ENCODE measurements at regions of chr5 and their contacts with region 1.

Region 1: DNA sequence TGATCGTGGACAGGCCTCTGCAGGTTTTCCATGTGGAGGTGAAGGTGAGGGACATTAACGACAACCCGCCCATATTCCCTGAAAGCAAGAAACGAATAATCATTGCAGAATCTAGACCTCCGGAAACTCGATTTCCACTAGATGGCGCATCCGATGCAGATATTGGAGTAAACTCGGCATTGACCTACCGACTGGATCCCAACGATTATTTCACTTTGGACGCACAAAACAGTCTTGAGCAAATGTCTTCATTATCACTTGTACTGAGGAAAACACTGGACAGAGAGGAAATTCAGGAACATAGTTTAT is 621 bp downstream of the PCDHA13 start:
- DNase-seq: peak; percentile 46
- H3K4me3 Mint-ChIP-seq: peak overlapping the region; percentile 42
- H3K27ac Mint-ChIP-seq: no peak overlapping the region
- H3K4me1 Mint-ChIP-seq: no peaks in the 10 kb centered on the region
- H3K27me3 Mint-ChIP-seq: no peaks in the 10 kb centered on the region
- CTCF ChIP-seq: no peak

Region 2: GRCh38 chr5:140806834-140807775 is 75.4 kb before region 1 on chr5 and contains the start of gene PCDHA4:
- CTCF ChIA-PET with region 1: no interaction called
- intact Hi-C with region 1: loop called (anchors 1 kb)
- DNase-seq: peak; percentile 69
- H3K4me3 Mint-ChIP-seq: peak within 1 kb of the TSS; percentile 68
- H3K27ac Mint-ChIP-seq: no peak within 1 kb of the TSS
- H3K4me1 Mint-ChIP-seq: no peaks in the 10 kb centered on the region
- H3K27me3 Mint-ChIP-seq: no peaks in the 10 kb centered on the region
- CTCF ChIP-seq: peak; percentile 49
- total RNA-seq, gene PCDHA4: 4.8 and 5.8 TPM in 2 replicates

Region 3: DNA sequence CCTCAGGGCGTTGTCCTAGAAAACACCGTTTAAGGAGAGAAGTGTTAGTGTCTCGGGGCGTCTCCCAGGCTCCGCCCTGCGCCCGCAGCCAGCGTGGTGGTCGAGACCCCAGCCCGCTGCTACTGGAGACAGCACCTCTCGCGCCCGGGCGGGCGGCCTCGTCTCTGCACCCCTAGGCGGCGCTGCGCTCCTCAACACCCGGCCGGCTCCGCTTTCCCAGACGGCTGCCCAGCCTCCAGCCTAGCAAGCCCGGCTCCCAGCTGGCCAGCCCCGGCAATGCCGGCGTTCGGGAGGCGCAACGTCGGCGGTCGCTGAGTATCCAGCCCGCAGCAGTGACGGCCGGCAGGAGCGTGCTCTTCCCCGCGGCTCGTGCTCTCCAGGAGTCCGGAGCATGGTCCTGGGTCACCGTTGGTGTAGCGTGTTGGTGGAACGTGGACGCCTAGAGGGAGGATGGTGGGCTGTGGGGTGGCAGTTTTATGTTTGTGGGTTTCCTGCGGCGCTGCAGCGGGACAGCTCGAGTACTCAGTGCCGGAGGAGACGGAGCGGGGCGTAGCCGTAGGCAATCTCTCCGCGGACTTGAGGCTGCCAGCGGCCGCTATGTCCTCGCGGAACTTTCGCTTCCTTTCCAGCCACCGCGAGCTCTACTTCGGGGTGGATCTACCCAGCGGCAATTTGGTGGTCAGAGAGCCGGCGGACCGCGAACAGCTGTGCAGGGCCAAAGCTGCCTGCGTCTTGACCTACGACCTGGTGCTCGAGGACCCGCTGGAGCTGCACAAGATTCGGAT is 44.1 kb after region 1 on chr5:
- CTCF ChIA-PET with region 1: no interaction called
- intact Hi-C with region 1: loop called (anchors 2 kb)
- DNase-seq: peak; percentile 76
- H3K4me3 Mint-ChIP-seq: peak overlapping the region; percentile 76
- H3K27ac Mint-ChIP-seq: no peak overlapping the region
- H3K4me1 Mint-ChIP-seq: no peaks in the 10 kb centered on the region
- H3K27me3 Mint-ChIP-seq: no peaks in the 10 kb centered on the region
- CTCF ChIP-seq: peak; percentile 31

Measured in Calu3 (cell line).